Thyroid gland (tissue), 4 donors: ENCODE measurements at regions of chr5 and their contacts with region 1.

Region 1: DNA sequence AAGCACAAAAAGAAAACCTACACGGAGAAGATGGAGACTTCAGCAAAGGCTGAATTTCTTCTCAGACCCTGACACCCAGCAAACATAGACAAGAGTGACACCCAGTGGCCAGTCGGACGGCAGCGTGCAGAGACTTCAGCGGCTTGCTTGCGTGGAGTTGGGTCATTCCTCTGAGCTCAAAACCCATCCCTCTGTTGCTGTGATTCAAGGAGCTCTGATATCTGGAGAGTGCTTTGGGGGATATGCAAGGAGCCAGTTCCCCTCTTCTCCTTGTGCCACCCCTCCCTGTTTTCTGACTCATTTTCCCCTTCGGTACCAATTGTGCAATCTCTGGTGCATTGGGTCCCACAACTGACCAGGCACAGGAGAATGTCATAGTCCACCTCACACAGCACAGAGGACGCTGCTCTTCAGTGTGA is 27.5 kb downstream of the SH3TC2 start:
- DNase-seq: peak; percentile 59 to 75
- H3K4me3 ChIP-seq: no peak overlapping the region
- H3K27ac ChIP-seq: no peak overlapping the region
- H3K4me1 ChIP-seq: no peaks in the 10 kb centered on the region
- H3K27me3 ChIP-seq: no peaks in the 10 kb centered on the region
- CTCF ChIP-seq: peak; percentile 53 to 85 (median 70)
- POLR2A ChIP-seq: no peak

Region 2: GRCh38 chr5:148443998-148444397 is 591.4 kb before region 1 on chr5:
- intact Hi-C with region 1: loop called (anchors 10 kb)
- DNase-seq: peak; percentile 8 to 31
- H3K4me3 ChIP-seq: no peak overlapping the region
- H3K27ac ChIP-seq: no peak overlapping the region
- H3K4me1 ChIP-seq: no peaks in the 10 kb centered on the region
- H3K27me3 ChIP-seq: no peaks in the 10 kb centered on the region
- CTCF ChIP-seq: peak; percentile 26 to 80 (median 60)
- POLR2A ChIP-seq: no peak

Region 3: GRCh38 chr5:148740966-148741742 is 294.2 kb before region 1 on chr5:
- intact Hi-C with region 1: loop called (anchors 5 kb)
- DNase-seq: no peak
- H3K4me3 ChIP-seq: no peak overlapping the region
- H3K27ac ChIP-seq: no peak overlapping the region
- H3K4me1 ChIP-seq: no peaks in the 10 kb centered on the region
- H3K27me3 ChIP-seq: no peaks in the 10 kb centered on the region
- CTCF ChIP-seq: peak; percentile 35 to 66 (median 57)
- POLR2A ChIP-seq: no peak

Region 4: DNA sequence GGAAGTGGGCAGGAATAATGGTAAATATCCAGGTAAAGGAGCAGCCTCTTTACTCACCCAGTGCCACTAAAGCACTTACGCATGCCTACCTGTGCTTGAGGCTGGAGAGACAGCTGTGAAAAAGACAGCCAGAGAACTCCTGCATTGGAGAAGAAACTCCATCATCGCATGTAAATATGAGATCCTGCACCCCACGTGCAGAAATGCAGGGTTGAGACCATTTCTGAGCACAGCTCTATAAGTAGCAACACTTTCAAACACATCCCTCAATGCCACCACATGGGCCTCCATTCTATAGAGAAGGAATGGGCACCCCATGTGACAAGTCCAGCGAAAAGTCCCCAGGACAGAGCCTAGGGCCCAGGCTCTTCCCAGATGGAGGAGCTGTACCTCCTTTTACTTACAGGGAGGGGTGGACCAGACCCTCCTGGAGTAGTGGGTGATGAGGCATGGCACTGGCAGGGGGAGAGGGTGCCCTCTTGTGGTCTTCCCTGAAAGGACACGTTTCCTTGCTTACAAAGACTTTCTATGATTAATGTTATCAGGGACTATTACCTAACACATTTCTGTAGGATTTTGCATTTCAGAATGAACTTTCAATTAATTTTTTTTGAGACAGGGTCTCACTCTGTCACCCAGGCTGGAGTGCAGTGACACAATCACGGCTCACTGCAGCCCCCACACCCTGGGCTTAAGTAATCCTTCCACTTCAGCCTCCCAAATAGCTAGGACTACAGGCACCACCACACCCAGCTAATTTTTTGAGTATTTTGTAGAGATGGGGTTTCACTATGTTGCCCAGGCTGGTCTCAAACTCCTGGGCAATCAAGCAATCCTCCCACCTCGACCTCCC is 399.0 kb after region 1 on chr5:
- intact Hi-C with region 1: no loop called
- DNase-seq: peak; percentile 46 to 57
- H3K4me3 ChIP-seq: no peak overlapping the region
- H3K27ac ChIP-seq: no peak overlapping the region
- H3K4me1 ChIP-seq: no peaks in the 10 kb centered on the region
- H3K27me3 ChIP-seq: no peaks in the 10 kb centered on the region
- CTCF ChIP-seq: peak; percentile 40 to 89 (median 60)
- POLR2A ChIP-seq: no peak

Region 5: GRCh38 chr5:149969181-149969930 is 934.0 kb after region 1 on chr5:
- intact Hi-C with region 1: no loop called
- DNase-seq: no peak
- H3K4me3 ChIP-seq: no peak overlapping the region
- H3K27ac ChIP-seq: no peak overlapping the region
- H3K4me1 ChIP-seq: no peaks in the 10 kb centered on the region
- H3K27me3 ChIP-seq: no peaks in the 10 kb centered on the region
- CTCF ChIP-seq: no peak
- POLR2A ChIP-seq: no peak